HepG2 (cell line): ENCODE measurements at regions of chr4 and their contacts with region 1.

Region 1: DNA sequence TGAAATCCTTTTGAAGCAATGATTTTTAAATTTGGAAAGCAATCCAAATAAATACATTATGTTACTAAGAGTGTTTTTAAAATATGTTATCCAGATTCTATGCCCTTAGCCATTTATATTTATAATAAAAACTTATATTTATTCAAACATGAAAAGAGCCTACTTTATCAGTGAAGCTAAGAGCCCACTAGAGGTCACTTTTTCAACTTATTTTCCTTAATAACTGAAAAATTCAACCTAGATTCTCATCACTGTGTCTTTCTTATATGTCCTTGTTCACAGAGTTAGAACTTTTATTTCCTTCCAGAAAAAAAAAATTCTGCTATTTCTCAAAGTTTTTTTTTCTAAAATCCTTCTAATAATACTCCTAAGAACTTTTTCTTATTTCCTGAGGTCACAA is 23.9 kb downstream of the PRDM8 start:
- DNase-seq: no peak
- ATAC-seq: no peak
- H3K4me3 ChIP-seq: no peak overlapping the region
- H3K27ac ChIP-seq: no peak overlapping the region
- H3K4me1 ChIP-seq: no peaks in the 10 kb centered on the region
- H3K27me3 ChIP-seq: no peaks in the 10 kb centered on the region
- CTCF ChIP-seq: no peak
- EP300 ChIP-seq: no peak
- POLR2A ChIP-seq: no peak
- RAD21 ChIP-seq: no peak

Region 2: DNA sequence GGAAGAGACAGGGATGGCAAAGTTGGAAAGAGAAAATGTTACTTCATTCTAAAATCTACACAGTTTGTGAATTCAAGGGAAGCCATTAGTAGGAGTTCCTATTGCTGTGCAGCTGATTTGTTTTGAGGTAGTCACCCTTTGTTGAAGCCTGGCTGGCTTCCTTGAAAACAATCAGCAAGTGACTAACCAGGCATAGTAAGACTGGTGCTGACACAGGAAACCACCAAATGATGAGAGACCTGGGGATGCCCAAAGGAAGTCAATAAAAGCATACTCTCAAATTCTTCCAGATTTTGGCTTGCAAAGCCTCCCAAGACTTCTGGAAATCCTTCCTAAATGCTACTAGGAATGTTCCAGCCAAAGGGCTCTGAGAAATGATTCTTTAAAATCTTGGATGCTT is 47.8 kb before region 1 on chr4:
- CTCF ChIA-PET with region 1: no interaction called
- POLR2A ChIA-PET with region 1: no interaction called
- in situ Hi-C with region 1: no loop called
- intact Hi-C with region 1: no loop called
- DNase-seq: no peak
- ATAC-seq: no peak
- H3K4me3 ChIP-seq: no peak overlapping the region
- H3K27ac ChIP-seq: no peak overlapping the region
- H3K4me1 ChIP-seq: no peaks in the 10 kb centered on the region
- H3K27me3 ChIP-seq: no peaks in the 10 kb centered on the region
- CTCF ChIP-seq: no peak
- EP300 ChIP-seq: no peak
- POLR2A ChIP-seq: no peak
- RAD21 ChIP-seq: no peak

Region 3: DNA sequence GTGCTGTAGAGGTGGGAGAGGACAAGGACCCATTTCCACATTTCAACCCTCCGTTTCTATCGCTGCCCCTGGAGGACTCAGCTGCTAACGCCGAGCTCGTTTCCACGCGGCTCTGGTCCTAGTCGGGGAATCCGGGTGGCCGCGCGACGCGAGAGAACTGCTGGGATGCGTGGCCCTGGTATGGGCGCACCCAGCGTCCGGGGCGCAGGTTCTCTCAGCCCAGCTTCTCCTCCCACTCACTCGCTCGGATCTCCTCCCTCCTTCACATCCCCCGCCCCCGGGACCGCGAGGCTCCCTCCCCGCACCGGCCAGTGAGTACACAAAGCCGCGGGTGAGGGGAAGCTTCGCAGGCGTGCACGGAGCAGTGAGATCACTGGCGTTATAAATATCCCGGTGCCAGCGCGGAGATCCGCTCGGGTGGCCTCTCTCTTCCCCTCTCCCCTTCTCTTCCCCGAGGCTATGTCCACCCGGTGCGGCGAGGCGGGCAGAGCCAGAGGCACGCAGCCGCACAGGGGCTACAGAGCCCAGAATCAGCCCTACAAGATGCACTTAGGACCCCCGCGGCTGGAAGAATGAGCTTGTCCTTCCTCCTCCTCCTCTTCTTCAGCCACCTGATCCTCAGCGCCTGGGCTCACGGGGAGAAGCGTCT is 45.2 kb after region 1 on chr4 and contains the start of gene FGF5:
- CTCF ChIA-PET with region 1: no interaction called
- POLR2A ChIA-PET with region 1: no interaction called
- in situ Hi-C with region 1: no loop called
- intact Hi-C with region 1: no loop called
- DNase-seq: no peak
- ATAC-seq: peak; percentile 66
- H3K4me3 ChIP-seq: peak within 1 kb of the TSS in 1 of 3 experiments; percentile 33; a peak in 1 of 6 replicates
- H3K27ac ChIP-seq: no peak within 1 kb of the TSS
- H3K4me1 ChIP-seq: no peaks in the 10 kb centered on the region
- H3K27me3 ChIP-seq: peaks cover 2 to 40% of the 10 kb centered on the region in 2 experiments; a peak in 4 of 5 replicates
- CTCF ChIP-seq: no peak
- EP300 ChIP-seq: no peak
- POLR2A ChIP-seq: no peak
- RAD21 ChIP-seq: no peak
- total RNA-seq, gene FGF5: not detected in 2 replicates

Region 4: GRCh38 chr4:80335554-80336358 is 114.6 kb after region 1 on chr4 and contains the start of gene CFAP299:
- CTCF ChIA-PET with region 1: no interaction called
- POLR2A ChIA-PET with region 1: no interaction called
- in situ Hi-C with region 1: no loop called
- intact Hi-C with region 1: loop called (anchors 5 kb)
- DNase-seq: peak; percentile 79
- ATAC-seq: peak; percentile 98
- H3K4me3 ChIP-seq: peak within 1 kb of the TSS; percentile 60 to 77 (median 64)
- H3K27ac ChIP-seq: no peak within 1 kb of the TSS
- H3K4me1 ChIP-seq: peaks cover 9% of the 10 kb centered on the region
- H3K27me3 ChIP-seq: peaks cover 0 to 14% of the 10 kb centered on the region in 2 experiments; a peak in 2 of 5 replicates
- CTCF ChIP-seq: peak; percentile 80
- EP300 ChIP-seq: no peak
- POLR2A ChIP-seq: no peak
- RAD21 ChIP-seq: peak; percentile 28; the same call in 1 of the 2 replicates
- total RNA-seq, gene CFAP299: not detected in 2 replicates